Activated T-helper 2 cell treated with anti-CD3 and anti-CD28 coated beads, Interferon-gamma antibody, Interleukin-2, Interleukin-4, amounts not matched to agents 10 μg/mL and 5 μg/mL and 100 μg/mL, durations not matched to agents 14 hours and 24 hours and 36 hours (primary cell): ENCODE measurements at regions of chr17 and their contacts with region 1.

Region 1: DNA sequence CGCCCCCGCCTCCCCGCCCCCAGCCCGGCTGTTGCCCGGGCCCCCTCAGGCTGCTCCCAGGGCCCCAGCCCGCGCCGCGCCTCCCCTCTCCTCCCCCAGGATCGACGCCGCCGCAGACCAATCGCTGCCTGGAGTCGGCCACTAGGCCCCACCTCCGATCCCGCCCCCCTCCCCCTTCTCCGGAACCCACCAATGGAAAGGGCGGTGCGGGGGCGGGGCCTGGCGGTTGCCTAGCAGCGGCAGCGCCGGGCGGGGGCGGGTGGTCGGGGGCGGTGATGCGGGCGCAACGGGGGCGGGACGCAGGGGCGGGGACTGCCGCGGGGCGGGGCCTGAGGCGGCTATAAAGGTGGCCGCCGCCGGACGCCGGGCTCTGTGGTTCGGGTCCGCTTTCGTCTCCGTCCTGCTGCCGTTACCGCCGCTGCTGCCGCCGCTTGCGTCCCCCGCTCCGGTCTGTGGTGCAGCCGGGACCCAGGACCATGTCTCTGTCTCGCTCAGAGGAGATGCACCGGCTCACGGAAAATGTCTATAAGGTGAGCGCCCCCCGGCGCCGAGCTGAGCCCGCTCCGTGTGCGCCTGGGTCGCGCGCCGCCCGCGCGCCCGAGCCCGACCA is at the start of gene BAIAP2:
- DNase-seq: peak; percentile 88
- H3K4me3 Mint-ChIP-seq: peak within 1 kb of the TSS; percentile 81
- H3K27ac Mint-ChIP-seq: no peak within 1 kb of the TSS
- H3K4me1 Mint-ChIP-seq: peaks cover 3% of the 10 kb centered on the region
- H3K27me3 Mint-ChIP-seq: peaks cover 46% of the 10 kb centered on the region
- total RNA-seq, gene BAIAP2: 5.3 TPM in 2 replicates

Region 2: DNA sequence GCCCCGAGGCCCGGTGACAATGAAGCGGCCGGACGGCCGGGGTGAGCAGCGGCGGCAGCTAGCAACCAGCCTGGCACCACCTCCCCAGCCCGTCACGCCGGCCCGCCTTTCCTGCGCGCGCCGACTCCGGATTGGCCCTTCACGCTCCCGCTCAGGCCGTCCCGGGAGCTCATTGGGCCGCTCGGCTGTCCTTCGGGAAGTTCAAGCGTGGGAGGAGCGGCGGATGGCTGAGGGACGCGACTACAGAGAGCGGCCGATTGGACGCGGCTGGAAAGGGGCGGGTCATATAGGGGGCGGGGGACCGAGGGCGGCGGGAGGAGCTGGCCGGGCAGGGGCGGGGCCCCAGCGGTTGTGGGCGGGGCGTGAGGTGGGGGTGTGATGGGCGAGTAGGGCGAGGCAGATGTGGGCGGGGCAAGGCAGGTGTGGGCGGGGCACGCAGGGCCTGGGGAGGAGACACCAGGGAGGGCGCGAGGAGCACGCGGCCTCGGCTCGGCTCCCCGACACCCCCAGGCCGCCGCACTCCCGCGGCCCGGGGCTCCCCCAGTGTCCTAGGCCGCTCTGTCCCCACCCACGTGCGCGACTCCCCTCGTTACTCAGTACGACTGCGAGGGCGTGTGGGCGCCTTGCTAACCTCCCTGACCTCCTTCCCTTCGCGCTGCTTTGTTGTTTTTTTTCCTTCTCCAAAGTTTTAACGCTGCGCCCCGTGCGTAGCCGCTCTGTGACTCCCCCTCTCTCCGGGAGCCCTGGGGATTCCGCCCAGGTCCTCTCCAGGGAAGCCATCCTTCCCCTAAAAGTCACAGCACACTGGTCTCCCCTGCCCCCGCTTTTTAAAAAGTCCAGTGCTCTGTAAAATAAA is 188.2 kb after region 1 on chr17 and contains the start of gene CEP131:
- intact Hi-C with region 1: loop called (anchors 10 kb)
- DNase-seq: peak; percentile 98
- H3K4me3 Mint-ChIP-seq: peak within 1 kb of the TSS; percentile 71
- H3K27ac Mint-ChIP-seq: peak within 1 kb of the TSS; percentile 80
- H3K4me1 Mint-ChIP-seq: peaks cover 18% of the 10 kb centered on the region
- H3K27me3 Mint-ChIP-seq: no peaks in the 10 kb centered on the region
- total RNA-seq, gene CEP131: 14.0 and 14.8 TPM in 2 replicates